ENCODE measurements at regions of chr5 and their contacts with region 1.

Region 1: GRCh38 chr5:1523771-1524480 is at the start of gene LPCAT1:
- DNase-seq: peak; percentile 74
- H3K4me3 Mint-ChIP-seq: peak within 1 kb of the TSS; percentile 91
- H3K27ac Mint-ChIP-seq: peak within 1 kb of the TSS; percentile 34
- H3K4me1 Mint-ChIP-seq: peaks cover 15% of the 10 kb centered on the region
- H3K27me3 Mint-ChIP-seq: no peaks in the 10 kb centered on the region
- total RNA-seq, gene LPCAT1: 103 and 110 TPM in 2 replicates

Region 2: GRCh38 chr5:513216-514100 is 1010.5 kb before region 1 on chr5:
- intact Hi-C with region 1: no loop called
- DNase-seq: no peak
- H3K4me3 Mint-ChIP-seq: no peak overlapping the region
- H3K27ac Mint-ChIP-seq: no peak overlapping the region
- H3K4me1 Mint-ChIP-seq: no peaks in the 10 kb centered on the region
- H3K27me3 Mint-ChIP-seq: peaks cover 5% of the 10 kb centered on the region

Region 3: GRCh38 chr5:1167728-1168709 is 355.9 kb before region 1 on chr5:
- intact Hi-C with region 1: no loop called
- DNase-seq: peak; percentile 61
- H3K4me3 Mint-ChIP-seq: peak overlapping the region; percentile 67
- H3K27ac Mint-ChIP-seq: peak overlapping the region; percentile 56
- H3K4me1 Mint-ChIP-seq: peaks cover 8% of the 10 kb centered on the region
- H3K27me3 Mint-ChIP-seq: peaks cover 7% of the 10 kb centered on the region

Region 4: GRCh38 chr5:1536322-1536845 is 12.5 kb after region 1 on chr5:
- intact Hi-C with region 1: loop called (anchors 1 kb)
- DNase-seq: peak; percentile 50
- H3K4me3 Mint-ChIP-seq: peak overlapping the region; percentile 71
- H3K27ac Mint-ChIP-seq: peak overlapping the region; percentile 79
- H3K4me1 Mint-ChIP-seq: peaks cover 20% of the 10 kb centered on the region
- H3K27me3 Mint-ChIP-seq: peaks cover 25% of the 10 kb centered on the region

Region 5: GRCh38 chr5:1594357-1595106 is 70.6 kb after region 1 on chr5:
- intact Hi-C with region 1: loop called (anchors 1 kb)
- DNase-seq: peak; percentile 39
- H3K4me3 Mint-ChIP-seq: peak overlapping the region; percentile 60
- H3K27ac Mint-ChIP-seq: no peak overlapping the region
- H3K4me1 Mint-ChIP-seq: peaks cover 7% of the 10 kb centered on the region
- H3K27me3 Mint-ChIP-seq: no peaks in the 10 kb centered on the region

Region 6: GRCh38 chr5:1633605-1634336 is 109.8 kb after region 1 on chr5:
- intact Hi-C with region 1: loop called (anchors 2 kb)
- DNase-seq: peak; percentile 78
- H3K4me3 Mint-ChIP-seq: peak overlapping the region; percentile 94
- H3K27ac Mint-ChIP-seq: peak overlapping the region; percentile 89
- H3K4me1 Mint-ChIP-seq: peaks cover 19% of the 10 kb centered on the region
- H3K27me3 Mint-ChIP-seq: peaks cover 3% of the 10 kb centered on the region

Region 7: GRCh38 chr5:1792842-1793266 is 268.9 kb after region 1 on chr5:
- intact Hi-C with region 1: loop called (anchors 1 kb)
- DNase-seq: peak; percentile 78
- H3K4me3 Mint-ChIP-seq: peak overlapping the region; percentile 80
- H3K27ac Mint-ChIP-seq: peak overlapping the region; percentile 96
- H3K4me1 Mint-ChIP-seq: peaks cover 80% of the 10 kb centered on the region
- H3K27me3 Mint-ChIP-seq: peaks cover 1% of the 10 kb centered on the region